ENCODE measurements at regions of chr11 and their contacts with region 1.

Region 1: GRCh38 chr11:85664615-85665481 is at the start of gene CREBZF:
- DNase-seq: peak; percentile 93 to 97 (median 96)
- H3K4me3 ChIP-seq: peak within 1 kb of the TSS; percentile 85 to 99 (median 95)
- H3K27ac ChIP-seq: peak within 1 kb of the TSS; percentile 93 to 98
- H3K4me1 ChIP-seq: peaks cover 10 to 33% (median 25%) of the 10 kb centered on the region in 4 experiments
- H3K27me3 ChIP-seq: no peaks in the 10 kb centered on the region

Region 2: GRCh38 chr11:85647604-85648299 is 17.1 kb before region 1 on chr11 and contains the start of gene TMEM126A:
- CTCF ChIA-PET with region 1: interaction called, 10 read pairs
- POLR2A ChIA-PET with region 1: no interaction called
- DNase-seq: peak; percentile 81 to 90 (median 85)
- H3K4me3 ChIP-seq: peak within 1 kb of the TSS; percentile 86 to 99 (median 90)
- H3K27ac ChIP-seq: peak within 1 kb of the TSS; percentile 81 to 84
- H3K4me1 ChIP-seq: peaks cover 6 to 23% (median 12%) of the 10 kb centered on the region in 4 experiments
- H3K27me3 ChIP-seq: peaks cover 0 to 19% (median 7%) of the 10 kb centered on the region in 5 experiments

Region 3: DNA sequence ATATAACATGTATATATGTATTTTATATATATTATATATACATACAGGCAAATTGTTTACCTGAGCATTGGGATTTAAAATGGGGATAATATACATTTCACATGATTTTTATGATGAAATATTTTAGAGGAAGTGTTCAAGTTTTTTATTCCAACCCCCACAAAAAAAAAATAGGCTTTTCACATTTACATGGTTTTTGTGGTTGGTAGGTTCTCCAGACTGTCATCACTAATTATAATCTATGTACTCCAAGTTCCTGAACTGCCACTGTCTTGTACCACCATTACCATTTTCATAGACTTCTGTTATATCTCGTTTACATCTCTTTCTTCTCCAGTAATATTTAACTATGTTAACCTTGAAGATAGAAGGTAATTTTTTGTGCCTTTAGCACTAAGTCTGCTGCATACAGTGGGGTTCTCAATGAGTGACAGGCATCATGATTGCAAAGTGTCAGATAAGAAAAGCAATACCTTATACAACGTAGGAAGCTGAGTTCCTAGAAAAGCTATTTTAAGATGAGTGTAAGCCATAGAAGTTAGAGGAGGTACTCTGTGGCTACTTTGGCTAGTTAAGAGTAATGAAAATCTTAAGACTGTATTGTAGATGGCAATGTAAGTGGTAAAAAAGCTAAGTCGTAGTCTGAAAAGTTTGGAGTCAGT is 11.9 kb before region 1 on chr11:
- CTCF ChIA-PET with region 1: interaction called, 10 read pairs
- POLR2A ChIA-PET with region 1: no interaction called
- DNase-seq: peak in 2 of 3 donors; percentile 71 to 81
- H3K4me3 ChIP-seq: peak overlapping the region in 1 of 7 experiments; percentile 17
- H3K27ac ChIP-seq: no peak overlapping the region
- H3K4me1 ChIP-seq: peaks cover 5 to 23% (median 15%) of the 10 kb centered on the region in 4 experiments
- H3K27me3 ChIP-seq: no peaks in the 10 kb centered on the region

Region 4: GRCh38 chr11:85682330-85683305 is 17.8 kb after region 1 on chr11:
- CTCF ChIA-PET with region 1: interaction called, 10 read pairs
- POLR2A ChIA-PET with region 1: interaction called, 3 read pairs
- DNase-seq: peak; percentile 58 to 73 (median 70)
- H3K4me3 ChIP-seq: peak overlapping the region; percentile 55 to 92 (median 83)
- H3K27ac ChIP-seq: peak overlapping the region; percentile 62 to 85
- H3K4me1 ChIP-seq: peaks cover 0 to 6% (median 4%) of the 10 kb centered on the region in 4 experiments
- H3K27me3 ChIP-seq: no peaks in the 10 kb centered on the region

Region 5: DNA sequence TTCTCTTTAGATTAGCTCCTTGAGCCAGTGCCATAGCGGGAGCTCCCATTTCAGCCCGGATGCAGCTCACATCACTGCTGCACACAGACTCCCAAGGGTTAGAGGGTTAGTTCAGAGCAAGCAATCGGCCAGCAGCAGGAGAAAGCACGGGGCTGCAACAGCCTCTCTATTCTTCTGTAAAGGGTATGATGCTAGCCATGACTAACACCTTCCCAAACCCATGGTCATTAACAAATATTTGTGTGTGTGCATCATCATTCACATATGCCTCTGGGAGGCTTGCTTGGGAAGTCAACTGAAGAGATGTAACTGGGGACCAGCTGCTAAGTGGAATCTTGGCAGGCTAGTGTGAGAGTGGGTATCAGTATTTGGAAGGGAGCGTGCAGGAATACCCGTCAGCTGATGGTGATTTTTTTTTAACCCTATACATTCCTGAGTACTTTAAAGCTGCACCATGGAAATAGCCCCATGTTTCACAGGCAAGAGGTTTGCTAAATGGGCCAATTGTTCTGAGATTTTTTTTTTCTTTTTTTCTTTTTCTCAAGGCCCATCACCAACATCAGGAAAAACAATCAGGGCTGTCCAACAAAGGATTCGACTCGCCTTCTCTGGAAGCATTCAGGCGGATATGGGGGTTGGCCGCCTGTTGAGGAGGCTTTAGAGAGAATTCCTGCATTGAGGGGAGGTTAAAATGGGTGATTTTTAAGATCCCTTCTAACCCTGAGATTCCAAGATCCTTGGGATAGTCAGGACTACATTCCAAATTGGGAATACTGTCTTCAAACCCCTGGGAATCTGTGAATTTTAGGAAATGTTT is 54.4 kb after region 1 on chr11:
- CTCF ChIA-PET with region 1: no interaction called
- POLR2A ChIA-PET with region 1: no interaction called
- DNase-seq: no peak
- H3K4me3 ChIP-seq: no peak overlapping the region
- H3K27ac ChIP-seq: no peak overlapping the region
- H3K4me1 ChIP-seq: no peaks in the 10 kb centered on the region
- H3K27me3 ChIP-seq: no peaks in the 10 kb centered on the region

Region 6: GRCh38 chr11:85844426-85845129 is 179.7 kb after region 1 on chr11:
- CTCF ChIA-PET with region 1: no interaction called
- POLR2A ChIA-PET with region 1: no interaction called
- DNase-seq: no peak
- H3K4me3 ChIP-seq: no peak overlapping the region
- H3K27ac ChIP-seq: no peak overlapping the region
- H3K4me1 ChIP-seq: no peaks in the 10 kb centered on the region
- H3K27me3 ChIP-seq: no peaks in the 10 kb centered on the region

Region 7: DNA sequence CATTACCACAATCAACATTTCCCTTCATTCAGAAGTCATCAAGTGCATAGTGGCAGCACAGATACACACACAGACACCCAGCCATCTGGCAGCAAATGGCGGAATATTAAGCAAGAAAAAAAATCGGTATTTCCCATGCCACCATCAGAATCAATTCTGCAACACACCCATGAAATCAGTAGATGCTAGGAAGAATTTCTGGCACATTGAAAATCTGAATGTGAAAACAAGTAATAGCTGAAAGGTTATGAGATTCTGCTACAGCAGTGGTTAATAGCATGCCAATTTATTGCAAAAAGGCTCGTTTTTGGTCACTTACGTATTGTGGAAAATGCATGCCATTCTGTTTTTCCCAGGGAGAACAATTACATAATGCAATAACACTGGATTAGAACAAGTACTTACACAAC is 312.9 kb after region 1 on chr11:
- CTCF ChIA-PET with region 1: no interaction called
- POLR2A ChIA-PET with region 1: no interaction called
- DNase-seq: no peak
- H3K4me3 ChIP-seq: no peak overlapping the region
- H3K27ac ChIP-seq: no peak overlapping the region
- H3K4me1 ChIP-seq: no peaks in the 10 kb centered on the region
- H3K27me3 ChIP-seq: no peaks in the 10 kb centered on the region

Measured in common myeloid progenitor, CD34-positive (primary cell).